Breast epithelium (tissue), 4 donors: ENCODE measurements at regions of chr12 and their contacts with region 1.

Region 1: DNA sequence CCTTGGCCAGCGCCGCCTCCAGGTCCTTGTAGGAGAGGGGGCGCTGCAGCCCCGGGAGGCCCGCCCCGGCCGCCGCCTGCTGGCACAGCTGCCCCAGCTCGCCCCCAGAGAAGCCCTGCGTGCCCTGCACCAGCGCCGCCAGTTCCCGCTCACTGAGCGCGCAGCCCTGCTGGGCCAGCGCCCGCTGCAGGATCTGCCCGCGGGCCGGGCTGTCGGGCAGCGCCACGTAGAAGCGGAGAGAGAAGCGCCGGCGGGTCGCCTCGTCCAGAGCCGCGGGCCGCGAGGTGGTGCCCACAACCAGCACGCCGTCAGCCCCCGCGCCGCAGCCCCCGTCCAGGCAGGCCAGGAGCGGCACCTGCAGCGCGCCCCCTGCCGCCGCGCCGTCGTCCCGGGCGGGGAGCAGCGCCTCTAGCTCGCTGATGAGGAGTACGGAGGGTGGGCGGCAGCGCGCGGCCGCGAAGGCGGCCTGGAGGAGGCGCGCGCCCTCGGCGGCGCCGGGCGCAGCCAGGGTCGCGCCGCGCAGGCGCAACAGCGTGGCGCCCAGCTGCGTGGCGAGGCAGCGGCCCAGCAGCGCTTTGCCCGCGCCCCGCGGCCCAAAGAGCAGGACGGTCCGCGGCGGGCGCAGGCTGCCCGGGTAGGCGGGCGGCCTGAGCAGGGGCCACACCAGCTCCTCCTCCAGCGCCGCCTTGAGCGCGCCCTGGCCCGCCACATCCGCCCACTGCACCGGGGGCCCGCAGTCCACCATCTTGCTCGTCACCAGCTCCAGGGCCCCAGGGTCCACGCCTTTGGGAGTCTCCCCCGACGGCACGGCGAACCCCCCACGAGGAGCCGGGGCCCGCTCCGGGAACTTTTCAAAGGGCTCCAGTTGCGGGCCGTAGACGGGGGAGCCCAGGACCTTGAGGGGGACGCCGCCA is 27.7 kb downstream of the FIGNL2 start:
- DNase-seq: peak in 1 of 2 donors; percentile 36
- H3K4me3 ChIP-seq: peak overlapping the region; percentile 28 to 86 (median 64)
- H3K27ac ChIP-seq: peak overlapping the region; percentile 79 to 90
- H3K4me1 ChIP-seq: peaks cover 0 to 4% of the 10 kb centered on the region in 2 donors
- H3K27me3 ChIP-seq: no peaks in the 10 kb centered on the region
- CTCF ChIP-seq: peak in 1 of 3 donors; percentile 29
- POLR2A ChIP-seq: no peak

Region 2: DNA sequence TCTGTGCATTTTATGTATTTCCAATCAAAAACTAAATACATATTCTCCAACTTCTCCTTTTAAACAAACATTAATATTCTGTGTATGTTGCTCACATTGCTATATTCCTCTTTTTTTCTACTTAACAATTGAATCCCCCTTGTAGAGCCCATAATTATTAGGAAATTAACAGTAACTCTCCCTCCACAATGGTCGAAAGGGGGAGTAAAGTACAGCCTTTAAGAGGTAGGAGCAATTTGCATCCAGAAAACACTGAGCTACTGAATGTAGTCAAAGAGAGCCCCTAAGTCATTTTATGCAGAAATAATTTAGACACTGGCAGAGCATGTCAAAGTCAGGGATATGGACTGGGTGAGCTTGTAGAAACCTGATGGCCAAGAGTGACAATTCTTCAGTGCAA is 287.0 kb before region 1 on chr12:
- intact Hi-C with region 1: no loop called
- DNase-seq: no peak
- H3K4me3 ChIP-seq: no peak overlapping the region
- H3K27ac ChIP-seq: no peak overlapping the region
- H3K4me1 ChIP-seq: no peaks in the 10 kb centered on the region
- H3K27me3 ChIP-seq: peaks cover 0 to 3% of the 10 kb centered on the region in 2 donors
- CTCF ChIP-seq: no peak
- POLR2A ChIP-seq: no peak

Region 3: DNA sequence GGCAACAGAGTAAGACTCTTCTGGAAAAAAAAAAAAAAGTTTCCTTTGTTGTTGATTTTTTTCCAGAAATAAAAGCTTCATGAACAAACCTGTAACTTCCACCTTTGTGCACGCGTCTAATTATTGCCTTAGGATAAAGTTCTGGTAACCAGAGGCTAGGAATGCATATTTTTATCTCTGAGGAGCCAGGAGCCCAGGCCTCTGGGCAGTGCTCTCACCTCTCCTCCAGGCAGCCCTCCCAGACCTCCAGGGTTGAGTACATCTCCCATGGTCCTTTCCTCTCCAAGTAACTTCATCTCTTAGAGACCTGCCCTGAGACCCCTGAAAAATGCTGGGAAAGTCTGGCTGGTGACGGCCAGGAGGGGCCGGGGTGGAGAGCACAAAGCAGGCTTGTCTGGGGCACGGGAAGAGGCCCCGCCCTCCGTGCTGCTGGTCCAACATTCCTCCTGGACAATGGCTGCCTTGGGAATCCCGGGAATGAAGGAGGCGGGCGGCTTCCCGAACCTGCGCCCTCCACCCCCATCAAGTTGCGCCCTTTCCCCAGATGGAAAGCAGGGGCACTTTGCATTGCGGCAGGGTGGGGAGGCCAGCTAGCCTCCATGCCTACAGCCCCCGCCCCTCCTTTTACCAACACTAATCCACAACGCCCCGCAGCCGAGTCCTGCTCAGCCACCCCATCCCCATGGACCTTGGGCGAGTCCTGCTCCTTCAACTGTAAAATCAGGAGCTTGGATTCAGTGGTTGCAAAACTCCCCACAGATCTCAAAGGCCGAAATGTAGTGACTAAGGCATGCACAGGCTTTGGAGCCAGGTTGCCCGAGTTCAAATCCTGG is 35.0 kb after region 1 on chr12:
- intact Hi-C with region 1: loop called (anchors 1 kb)
- DNase-seq: peak in 1 of 2 donors; percentile 60
- H3K4me3 ChIP-seq: peak overlapping the region; percentile 21 to 63 (median 45)
- H3K27ac ChIP-seq: peak overlapping the region; percentile 38 to 72
- H3K4me1 ChIP-seq: no peaks in the 10 kb centered on the region
- H3K27me3 ChIP-seq: no peaks in the 10 kb centered on the region
- CTCF ChIP-seq: no peak
- POLR2A ChIP-seq: no peak

Region 4: GRCh38 chr12:52351196-52352059 is 530.6 kb after region 1 on chr12:
- intact Hi-C with region 1: no loop called
- DNase-seq: peak; percentile 64 to 82
- H3K4me3 ChIP-seq: no peak overlapping the region
- H3K27ac ChIP-seq: peak overlapping the region; percentile 49 to 75
- H3K4me1 ChIP-seq: no peaks in the 10 kb centered on the region
- H3K27me3 ChIP-seq: no peaks in the 10 kb centered on the region
- CTCF ChIP-seq: no peak
- POLR2A ChIP-seq: no peak